Activated T-helper 1 cell treated with anti-CD3 and anti-CD28 coated beads, Interleukin-12 subunit alpha, Interleukin-12 subunit beta, Interleukin-2, Interleukin-4 antibody, amounts not matched to agents 30 ng/mL and 10 ng/mL and 1 ng/mL, durations not matched to agents 14 hours and 24 hours and 36 hours (primary cell): ENCODE measurements at regions of chr7 and their contacts with region 1.

Region 1: DNA sequence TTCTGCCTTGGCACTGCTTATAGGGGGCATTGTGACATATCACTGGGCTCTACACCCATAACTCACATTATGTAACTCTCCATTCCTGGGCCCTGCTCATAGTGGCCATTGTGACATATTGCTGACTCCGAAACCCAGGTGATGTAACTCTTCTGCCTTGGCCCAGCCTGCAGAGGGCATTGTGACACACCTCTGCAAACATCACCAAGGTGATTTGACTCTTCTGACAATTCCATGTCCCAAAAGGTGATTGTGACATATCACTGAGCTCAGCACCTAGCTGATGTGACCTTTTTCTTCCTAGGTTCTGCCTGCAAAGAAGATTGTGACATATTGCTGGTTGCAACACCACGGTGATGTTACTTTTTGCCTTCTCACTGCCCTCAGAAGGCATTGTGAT is 36.5 kb upstream of the ZNF680 start:
- DNase-seq: no peak
- H3K4me3 Mint-ChIP-seq: no peak overlapping the region
- H3K27ac Mint-ChIP-seq: no peak overlapping the region
- H3K4me1 Mint-ChIP-seq: no peaks in the 10 kb centered on the region
- H3K27me3 Mint-ChIP-seq: no peaks in the 10 kb centered on the region

Region 2: DNA sequence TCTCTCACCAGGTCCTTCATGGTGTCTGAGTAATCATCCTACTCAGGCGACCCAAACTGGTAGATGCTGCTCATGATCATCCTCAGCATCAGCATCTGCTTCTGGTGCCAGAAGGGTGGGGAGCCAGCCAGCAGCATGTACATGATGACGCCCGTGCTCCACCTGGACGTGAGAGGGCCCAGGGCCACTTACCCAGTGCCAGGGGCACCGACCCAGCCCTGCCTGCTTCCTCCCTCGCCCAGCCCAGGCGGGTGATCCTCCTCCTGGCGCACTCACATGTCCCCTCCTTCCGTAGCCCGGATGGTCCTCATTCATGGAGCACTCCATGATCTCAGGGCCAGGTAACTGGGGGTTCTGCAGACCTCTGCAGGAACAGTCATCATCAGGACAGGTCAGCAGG is 1365.5 kb before region 1 on chr7:
- intact Hi-C with region 1: no loop called
- DNase-seq: no peak
- H3K4me3 Mint-ChIP-seq: no peak overlapping the region
- H3K27ac Mint-ChIP-seq: no peak overlapping the region
- H3K4me1 Mint-ChIP-seq: no peaks in the 10 kb centered on the region
- H3K27me3 Mint-ChIP-seq: no peaks in the 10 kb centered on the region

Region 3: DNA sequence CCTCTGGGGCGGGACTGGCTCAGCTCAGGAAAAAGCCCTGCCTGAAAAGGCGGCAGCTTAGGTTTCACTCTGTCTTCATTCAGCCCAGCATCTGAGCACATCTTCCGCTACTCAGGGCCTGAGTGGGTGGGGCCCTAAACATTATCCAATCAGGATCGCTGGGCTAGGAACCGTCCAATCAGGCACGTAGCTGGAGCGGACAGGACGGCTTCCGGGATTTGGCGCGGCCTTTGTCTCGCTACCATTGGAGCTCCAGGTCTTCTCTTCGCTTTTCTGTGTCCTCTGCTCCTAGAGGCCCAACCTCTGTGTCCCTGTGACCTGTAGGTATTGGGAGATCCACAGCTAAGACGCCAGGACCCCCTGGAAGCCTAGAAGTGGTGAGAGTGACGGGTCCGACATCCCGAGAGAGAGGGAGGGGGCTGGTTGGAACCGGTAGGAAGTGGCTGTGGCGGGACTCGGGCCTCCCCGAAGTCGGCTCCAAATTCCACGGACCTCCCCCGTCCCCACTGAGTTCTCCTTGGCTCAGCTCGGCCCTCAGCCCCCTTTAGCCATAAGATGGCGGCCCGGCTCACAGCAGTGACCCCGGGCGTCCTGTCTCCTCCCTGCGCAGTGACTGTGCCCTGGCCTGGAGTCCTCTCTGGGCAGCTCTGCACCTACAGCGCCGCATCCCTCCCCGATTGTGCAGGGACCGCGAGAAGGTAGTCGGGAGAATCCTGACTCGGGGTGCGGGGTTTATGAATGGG is 135.5 kb before region 1 on chr7:
- intact Hi-C with region 1: loop called (anchors 10 kb)
- DNase-seq: no peak
- H3K4me3 Mint-ChIP-seq: no peak overlapping the region
- H3K27ac Mint-ChIP-seq: no peak overlapping the region
- H3K4me1 Mint-ChIP-seq: no peaks in the 10 kb centered on the region
- H3K27me3 Mint-ChIP-seq: no peaks in the 10 kb centered on the region